ENCODE measurements at regions of chr9 and their contacts with region 1.

Region 1: GRCh38 chr9:71716138-71716909 is 52.0 kb downstream of the CEMIP2 start:
- DNase-seq: peak; percentile 9
- H3K4me3 ChIP-seq: no peak overlapping the region
- H3K27ac ChIP-seq: no peak overlapping the region
- H3K4me1 ChIP-seq: peaks cover 0 to 1% of the 10 kb centered on the region in 2 experiments; a peak in 1 of 4 replicates
- H3K27me3 ChIP-seq: no peaks in the 10 kb centered on the region
- CTCF ChIP-seq: peak; percentile 80
- EP300 ChIP-seq: no peak
- RAD21 ChIP-seq: no peak

Region 2: GRCh38 chr9:71647094-71647591 is 69.2 kb before region 1 on chr9:
- CTCF ChIA-PET with region 1: no interaction called
- POLR2A ChIA-PET with region 1: no interaction called
- DNase-seq: no peak
- H3K4me3 ChIP-seq: no peak overlapping the region; a peak in 1 of 4 replicates
- H3K27ac ChIP-seq: no peak overlapping the region
- H3K4me1 ChIP-seq: peaks cover 0 to 11% of the 10 kb centered on the region in 2 experiments; a peak in 1 of 4 replicates
- H3K27me3 ChIP-seq: peaks cover 17% of the 10 kb centered on the region; the same call in 1 of the 2 replicates
- CTCF ChIP-seq: no peak
- EP300 ChIP-seq: no peak
- RAD21 ChIP-seq: no peak

Region 3: GRCh38 chr9:71726723-71727122 is 10.4 kb after region 1 on chr9:
- CTCF ChIA-PET with region 1: interaction called, 10 read pairs
- POLR2A ChIA-PET with region 1: no interaction called
- DNase-seq: no peak
- H3K4me3 ChIP-seq: no peak overlapping the region
- H3K27ac ChIP-seq: peak overlapping the region in 1 of 2 experiments; percentile 47; a peak in 2 of 4 replicates
- H3K4me1 ChIP-seq: 0 out of 4 replicates have a peak, but pooled peaks cover 0 to 2% of the 10 kb centered on the region in 2 experiments
- H3K27me3 ChIP-seq: no peaks in the 10 kb centered on the region
- CTCF ChIP-seq: no peak
- EP300 ChIP-seq: no peak
- RAD21 ChIP-seq: no peak

Measured in SK-N-SH (cell line).